Natural killer cell (primary cell): ENCODE measurements at regions of chrX and their contacts with region 1.

Region 1: DNA sequence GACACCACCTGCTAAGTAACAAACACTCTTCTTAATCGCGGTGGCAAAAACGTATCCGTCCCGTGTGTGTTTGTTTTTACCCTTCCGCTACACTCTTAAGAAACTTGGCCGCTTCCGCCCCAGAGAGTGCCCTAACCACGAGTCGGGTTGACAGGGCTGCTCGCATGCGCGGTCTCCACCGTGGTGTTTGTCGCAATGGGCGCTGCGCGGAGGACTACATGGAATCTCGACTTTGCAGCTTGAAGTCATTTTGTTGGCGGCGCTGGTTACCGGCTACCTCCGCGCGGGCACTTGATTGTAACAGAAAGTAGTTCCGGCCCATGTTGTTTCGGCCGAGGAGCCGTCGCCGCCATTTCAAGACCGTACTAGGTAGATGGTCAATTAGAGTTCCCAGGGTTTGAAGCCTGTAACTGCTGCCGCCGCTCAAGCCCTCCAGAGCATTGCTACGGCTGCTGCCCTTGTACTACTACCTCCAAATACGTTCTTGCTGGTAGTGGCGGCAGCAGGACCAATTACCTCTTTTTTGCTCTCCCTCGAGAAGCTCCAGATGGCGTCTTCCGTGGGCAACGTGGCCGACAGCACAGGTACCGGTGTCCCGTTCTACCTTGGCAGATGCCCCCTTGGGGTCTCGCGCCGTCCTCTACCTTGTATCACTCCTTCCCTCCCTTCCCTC is at the start of gene OGT:
- DNase-seq: peak; percentile 85 to 97
- ATAC-seq: peak; percentile 75 to 92 (median 85)
- H3K4me3 ChIP-seq: peak within 1 kb of the TSS; percentile 97
- H3K4me3 Mint-ChIP-seq: peak within 1 kb of the TSS; percentile 98
- H3K27ac ChIP-seq: peak within 1 kb of the TSS; percentile 97
- H3K27ac Mint-ChIP-seq: peak within 1 kb of the TSS; percentile 97 to 98
- H3K4me1 ChIP-seq: peaks cover 20% of the 10 kb centered on the region
- H3K4me1 Mint-ChIP-seq: peaks cover 32 to 35% of the 10 kb centered on the region in 2 donors
- H3K27me3 ChIP-seq: no peaks in the 10 kb centered on the region
- H3K27me3 Mint-ChIP-seq: no peaks in the 10 kb centered on the region
- CTCF ChIP-seq: no peak
- total RNA-seq, gene OGT: 489 to 721 (median 542) TPM

Region 2: DNA sequence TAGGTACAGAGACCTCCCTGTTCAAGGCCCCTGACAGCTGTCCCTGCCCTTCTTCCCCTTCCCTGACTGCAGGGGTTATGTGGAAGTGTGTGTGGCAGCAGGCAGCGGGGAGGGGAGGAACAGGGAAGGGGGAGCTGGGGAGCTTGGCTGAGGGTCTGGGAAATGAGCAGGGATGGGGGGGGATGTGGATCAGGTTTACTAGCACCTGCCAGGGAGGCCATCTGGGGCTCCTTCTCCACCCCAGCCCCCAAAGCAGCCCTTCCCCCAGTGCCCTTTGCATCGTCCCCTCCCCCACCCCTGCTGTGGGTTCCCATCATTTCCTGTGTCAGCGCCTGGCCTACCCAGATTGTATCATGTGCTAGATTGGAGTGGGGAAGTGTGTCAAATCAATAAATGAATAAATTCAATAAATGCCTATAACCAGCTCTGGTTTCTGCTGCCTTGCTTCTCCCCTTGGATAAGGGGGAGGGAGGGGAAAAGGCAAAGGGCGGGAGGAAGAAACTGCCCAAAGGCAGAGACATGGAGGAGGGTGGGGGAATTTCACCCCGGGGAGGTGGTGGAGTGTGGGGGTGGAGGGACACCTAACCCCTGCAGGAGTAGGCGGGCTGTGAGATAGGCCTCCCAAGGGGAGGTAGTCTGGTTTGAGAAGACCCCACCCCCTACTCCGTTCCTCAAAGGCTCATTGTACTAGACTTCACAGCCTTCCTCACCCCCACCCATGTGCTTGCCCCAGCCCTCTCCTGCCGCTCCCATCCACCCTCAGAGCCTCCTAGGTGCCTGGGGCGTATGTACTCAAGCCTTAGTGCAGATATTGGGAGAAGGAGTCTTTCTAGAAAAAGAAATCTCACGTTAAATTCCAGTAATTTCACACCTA is 429.5 kb before region 1 on chrX:
- intact Hi-C with region 1: loop called (anchors 10 kb)
- DNase-seq: peak; percentile 64 to 80
- ATAC-seq: peak; percentile 60 to 84 (median 70)
- H3K4me3 ChIP-seq: peak overlapping the region; percentile 28
- H3K4me3 Mint-ChIP-seq: peak overlapping the region; percentile 86
- H3K27ac ChIP-seq: peak overlapping the region; percentile 89
- H3K27ac Mint-ChIP-seq: peak overlapping the region; percentile 97 to 99
- H3K4me1 ChIP-seq: peaks cover 88% of the 10 kb centered on the region
- H3K4me1 Mint-ChIP-seq: peaks cover 62 to 82% of the 10 kb centered on the region in 2 donors
- H3K27me3 ChIP-seq: no peaks in the 10 kb centered on the region
- H3K27me3 Mint-ChIP-seq: peaks cover 0 to 13% of the 10 kb centered on the region in 2 donors
- CTCF ChIP-seq: no peak

Region 3: GRCh38 chrX:71365876-71366673 is 166.8 kb before region 1 on chrX and contains the start of gene TAF1:
- intact Hi-C with region 1: loop called (anchors 2 kb)
- DNase-seq: peak; percentile 83 to 95
- ATAC-seq: peak; percentile 84 to 95 (median 89)
- H3K4me3 ChIP-seq: peak within 1 kb of the TSS; percentile 93
- H3K4me3 Mint-ChIP-seq: peak within 1 kb of the TSS; percentile 97
- H3K27ac ChIP-seq: peak within 1 kb of the TSS; percentile 95
- H3K27ac Mint-ChIP-seq: peak within 1 kb of the TSS; percentile 97
- H3K4me1 ChIP-seq: peaks cover 25% of the 10 kb centered on the region
- H3K4me1 Mint-ChIP-seq: peaks cover 22 to 30% of the 10 kb centered on the region in 2 donors
- H3K27me3 ChIP-seq: no peaks in the 10 kb centered on the region
- H3K27me3 Mint-ChIP-seq: peaks cover 0 to 6% of the 10 kb centered on the region in 2 donors
- CTCF ChIP-seq: no peak
- total RNA-seq, gene TAF1: 89.5 to 94.5 (median 94.2) TPM

Region 4: GRCh38 chrX:71492231-71493065 is 40.4 kb before region 1 on chrX:
- intact Hi-C with region 1: loop called (anchors 2 kb)
- DNase-seq: peak; percentile 53 to 67
- ATAC-seq: peak; percentile 74 to 81 (median 79)
- H3K4me3 ChIP-seq: peak overlapping the region; percentile 70
- H3K4me3 Mint-ChIP-seq: peak overlapping the region; percentile 93
- H3K27ac ChIP-seq: peak overlapping the region; percentile 83
- H3K27ac Mint-ChIP-seq: peak overlapping the region; percentile 90 to 91
- H3K4me1 ChIP-seq: peaks cover 10% of the 10 kb centered on the region
- H3K4me1 Mint-ChIP-seq: peaks cover 11 to 21% of the 10 kb centered on the region in 2 donors
- H3K27me3 ChIP-seq: no peaks in the 10 kb centered on the region
- H3K27me3 Mint-ChIP-seq: no peaks in the 10 kb centered on the region
- CTCF ChIP-seq: no peak

Region 5: GRCh38 chrX:71579136-71579989 is 46.5 kb after region 1 on chrX:
- intact Hi-C with region 1: no loop called
- DNase-seq: peak; percentile 9 to 15
- ATAC-seq: peak in 2 of 3 donors; percentile 57 to 63
- H3K4me3 ChIP-seq: no peak overlapping the region
- H3K4me3 Mint-ChIP-seq: peak overlapping the region; percentile 25
- H3K27ac ChIP-seq: peak overlapping the region; percentile 11
- H3K27ac Mint-ChIP-seq: peak overlapping the region; percentile 68 to 84
- H3K4me1 ChIP-seq: peaks cover 18% of the 10 kb centered on the region
- H3K4me1 Mint-ChIP-seq: peaks cover 0 to 19% of the 10 kb centered on the region in 2 donors
- H3K27me3 ChIP-seq: no peaks in the 10 kb centered on the region
- H3K27me3 Mint-ChIP-seq: no peaks in the 10 kb centered on the region
- CTCF ChIP-seq: no peak

Region 6: DNA sequence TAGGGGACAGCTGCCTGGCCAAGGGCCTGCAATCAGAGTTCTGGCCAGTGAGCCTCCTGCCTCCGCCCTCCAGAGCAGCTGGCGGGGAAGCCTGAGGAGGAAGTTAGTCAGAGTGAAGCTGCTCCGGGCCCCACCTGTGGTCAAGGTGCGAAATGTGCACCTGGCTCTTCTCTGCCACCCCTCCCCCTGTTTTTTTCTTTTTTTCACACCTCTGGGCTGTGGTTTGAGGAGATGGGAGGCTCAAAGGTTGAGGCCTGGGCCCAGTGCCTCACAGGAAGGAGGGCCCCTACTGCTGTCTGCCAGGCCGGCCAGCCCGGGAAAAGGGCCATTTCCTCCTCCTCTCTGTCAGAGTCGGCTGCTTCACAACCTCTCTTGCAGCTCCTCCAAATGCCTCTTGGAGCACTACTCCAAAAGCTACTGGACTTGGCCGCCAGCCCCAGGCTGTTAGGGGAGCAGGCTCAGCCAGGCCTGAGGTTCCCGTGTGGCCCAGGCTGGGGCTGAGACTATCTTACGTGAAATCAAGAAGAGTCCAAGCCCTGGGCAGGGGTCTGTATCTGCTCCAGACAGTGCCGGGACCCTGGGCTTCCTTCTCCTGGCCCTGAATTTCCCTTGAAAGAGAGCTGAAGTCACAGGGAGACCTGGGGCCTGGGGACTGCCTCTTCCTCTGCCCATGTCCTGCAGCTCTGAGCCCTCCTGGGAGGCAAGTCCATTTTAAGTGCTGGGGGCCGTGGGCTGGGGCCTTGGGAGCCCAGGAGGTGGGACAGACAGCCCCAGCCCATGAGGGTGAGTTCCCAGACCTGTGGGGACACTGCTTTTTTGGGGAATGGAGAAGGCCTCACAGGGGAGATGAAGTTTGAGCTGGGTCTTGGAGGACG is 89.9 kb after region 1 on chrX:
- intact Hi-C with region 1: loop called (anchors 2 kb)
- DNase-seq: peak; percentile 46 to 85
- ATAC-seq: peak; percentile 51 to 71 (median 63)
- H3K4me3 ChIP-seq: no peak overlapping the region
- H3K4me3 Mint-ChIP-seq: peak overlapping the region; percentile 83
- H3K27ac ChIP-seq: peak overlapping the region; percentile 95
- H3K27ac Mint-ChIP-seq: peak overlapping the region; percentile 91 to 93
- H3K4me1 ChIP-seq: peaks cover 73% of the 10 kb centered on the region
- H3K4me1 Mint-ChIP-seq: peaks cover 53 to 68% of the 10 kb centered on the region in 2 donors
- H3K27me3 ChIP-seq: no peaks in the 10 kb centered on the region
- H3K27me3 Mint-ChIP-seq: no peaks in the 10 kb centered on the region
- CTCF ChIP-seq: no peak

Region 7: GRCh38 chrX:72100824-72101351 is 568.0 kb after region 1 on chrX:
- intact Hi-C with region 1: loop called (anchors 2 kb)
- DNase-seq: peak; percentile 75 to 90
- ATAC-seq: peak; percentile 61 to 85 (median 75)
- H3K4me3 ChIP-seq: peak overlapping the region; percentile 78
- H3K4me3 Mint-ChIP-seq: peak overlapping the region; percentile 92
- H3K27ac ChIP-seq: peak overlapping the region; percentile 96
- H3K27ac Mint-ChIP-seq: peak overlapping the region; percentile 88 to 91
- H3K4me1 ChIP-seq: peaks cover 71% of the 10 kb centered on the region
- H3K4me1 Mint-ChIP-seq: peaks cover 48 to 67% of the 10 kb centered on the region in 2 donors
- H3K27me3 ChIP-seq: no peaks in the 10 kb centered on the region
- H3K27me3 Mint-ChIP-seq: peaks cover 0 to 30% of the 10 kb centered on the region in 2 donors
- CTCF ChIP-seq: no peak